Heart right ventricle (tissue), 16 donors: ENCODE measurements at regions of chr21 and their contacts with region 1.

Region 1: GRCh38 chr21:19109694-19110093 is 706.1 kb upstream of the TMPRSS15 start:
- DNase-seq: no peak
- ATAC-seq: no peak
- H3K4me3 ChIP-seq: no peak overlapping the region
- H3K27ac ChIP-seq: no peak overlapping the region
- H3K4me1 ChIP-seq: no peaks in the 10 kb centered on the region
- H3K27me3 ChIP-seq: no peaks in the 10 kb centered on the region
- CTCF ChIP-seq: no peak

Region 2: DNA sequence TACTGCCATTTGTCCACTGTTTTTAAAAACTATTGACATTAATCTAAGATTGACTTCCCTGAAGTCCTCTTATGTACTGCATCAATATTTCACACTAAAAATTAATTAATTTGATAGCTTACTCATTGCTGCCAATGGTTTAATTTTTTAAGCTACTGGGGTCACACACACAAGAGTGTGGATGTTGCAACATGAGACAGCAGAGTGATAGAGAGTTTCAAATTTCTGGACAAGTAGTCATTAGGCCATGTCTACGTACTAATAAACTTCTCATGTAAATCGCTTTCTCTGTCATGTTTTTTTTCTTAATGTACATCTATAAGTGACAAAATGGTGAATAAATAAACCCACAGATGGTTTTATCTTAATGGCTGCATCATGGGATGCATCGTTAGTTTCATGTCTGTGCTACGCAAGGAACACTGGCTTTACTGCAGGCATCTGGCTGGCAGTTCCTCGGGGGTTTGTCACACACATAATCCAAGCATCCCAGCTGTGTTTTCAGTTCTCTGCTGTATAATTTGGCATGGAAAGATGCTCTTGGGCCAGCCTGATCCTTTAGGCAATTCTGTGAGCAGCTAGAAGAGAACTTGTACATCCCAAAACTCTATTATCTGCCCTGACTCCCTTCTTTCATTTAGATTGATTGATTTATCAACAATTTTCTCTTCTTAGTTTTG is 881.5 kb before region 1 on chr21:
- intact Hi-C with region 1: loop called in 1 of 10 experiments (anchors 5 kb)
- DNase-seq: no peak
- ATAC-seq: no peak
- H3K4me3 ChIP-seq: no peak overlapping the region
- H3K27ac ChIP-seq: no peak overlapping the region
- H3K4me1 ChIP-seq: no peaks in the 10 kb centered on the region
- H3K27me3 ChIP-seq: no peaks in the 10 kb centered on the region
- CTCF ChIP-seq: no peak

Region 3: DNA sequence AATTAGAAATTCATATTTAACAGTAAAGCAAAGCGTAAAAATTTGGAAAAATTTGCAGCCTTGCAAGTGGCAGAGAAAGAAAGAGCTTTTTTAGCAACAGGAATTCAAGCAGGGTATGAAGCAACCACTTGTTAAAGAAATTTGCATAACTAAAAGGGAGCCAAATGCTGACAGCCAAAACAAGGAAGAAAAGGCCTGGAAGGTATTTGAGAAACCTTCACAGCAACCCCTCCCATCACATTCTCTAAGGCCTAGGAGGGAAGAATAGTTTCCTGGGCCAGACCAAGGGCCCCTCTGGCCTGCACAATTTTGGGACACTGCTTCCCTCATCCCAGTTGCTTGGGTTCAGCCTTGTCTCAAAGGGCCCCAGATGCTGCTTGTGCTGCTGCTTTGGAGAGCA is 33.7 kb before region 1 on chr21:
- intact Hi-C with region 1: no loop called
- DNase-seq: no peak
- ATAC-seq: no peak
- H3K4me3 ChIP-seq: no peak overlapping the region
- H3K27ac ChIP-seq: no peak overlapping the region
- H3K4me1 ChIP-seq: no peaks in the 10 kb centered on the region
- H3K27me3 ChIP-seq: no peaks in the 10 kb centered on the region
- CTCF ChIP-seq: no peak